BJ (cell line): ENCODE measurements at regions of chr11 and their contacts with region 1.

Region 1: GRCh38 chr11:119474682-119475596 is 52.0 kb upstream of the THY1 start:
- DNase-seq: peak; percentile 56
- H3K4me3 ChIP-seq: no peak overlapping the region
- H3K27me3 ChIP-seq: peaks cover 2% of the 10 kb centered on the region
- CTCF ChIP-seq: peak; percentile 93

Region 2: GRCh38 chr11:118845369-118845768 is 629.6 kb before region 1 on chr11:
- CTCF ChIA-PET with region 1: no interaction called
- POLR2A ChIA-PET with region 1: no interaction called
- DNase-seq: no peak
- H3K4me3 ChIP-seq: no peak overlapping the region
- H3K27me3 ChIP-seq: 0 out of 2 replicates have a peak, but pooled peaks cover 3% of the 10 kb centered on the region
- CTCF ChIP-seq: no peak

Region 3: GRCh38 chr11:119334174-119334930 is 140.6 kb before region 1 on chr11 and contains the start of gene RNF26:
- CTCF ChIA-PET with region 1: interaction called, 43 read pairs
- POLR2A ChIA-PET with region 1: interaction called, 5 read pairs
- DNase-seq: peak; percentile 86
- H3K4me3 ChIP-seq: peak within 1 kb of the TSS; percentile 78
- H3K27me3 ChIP-seq: no peaks in the 10 kb centered on the region
- CTCF ChIP-seq: no peak
- polyA plus RNA-seq, gene RNF26: 38.4 and 65.1 TPM in 2 replicates

Region 4: DNA sequence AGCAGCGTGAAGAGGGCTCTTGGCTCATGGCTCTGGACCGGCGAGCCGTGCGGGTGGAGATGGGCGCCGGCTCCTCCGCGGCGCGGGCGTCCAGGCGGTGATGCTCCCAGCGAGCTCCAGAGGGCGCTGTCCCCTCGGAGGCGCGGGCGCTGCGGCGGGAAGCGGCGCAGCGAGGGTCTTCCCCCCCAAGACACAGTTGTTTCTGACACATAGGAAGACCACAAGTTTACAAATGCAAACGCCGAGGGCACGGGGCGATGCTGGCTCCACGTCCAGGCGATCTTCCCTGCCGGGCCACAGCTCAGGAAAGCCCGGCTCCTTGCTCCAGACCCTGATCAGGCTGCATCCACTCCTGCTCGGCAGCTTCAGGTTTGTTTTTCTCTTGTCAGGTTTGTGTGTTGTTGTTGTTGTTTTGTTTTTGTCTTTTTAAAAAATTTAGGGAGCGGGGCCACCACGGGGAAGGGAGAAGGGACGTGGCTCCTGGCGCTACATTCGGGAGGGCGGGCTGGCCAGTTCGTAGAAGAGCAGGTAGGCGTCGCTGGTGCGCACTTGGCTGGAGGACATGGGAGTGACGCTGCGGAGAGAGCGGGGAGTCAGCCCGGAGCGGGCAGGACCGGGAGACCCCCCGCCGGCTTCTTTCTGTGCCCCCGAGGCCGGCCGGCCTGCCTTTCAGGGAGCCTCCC is 118.4 kb before region 1 on chr11:
- CTCF ChIA-PET with region 1: interaction called, 189 read pairs
- POLR2A ChIA-PET with region 1: no interaction called
- DNase-seq: no peak
- H3K4me3 ChIP-seq: peak overlapping the region; percentile 53
- H3K27me3 ChIP-seq: peaks cover 4% of the 10 kb centered on the region; the same call in 1 of the 2 replicates
- CTCF ChIP-seq: peak; percentile 75

Region 5: DNA sequence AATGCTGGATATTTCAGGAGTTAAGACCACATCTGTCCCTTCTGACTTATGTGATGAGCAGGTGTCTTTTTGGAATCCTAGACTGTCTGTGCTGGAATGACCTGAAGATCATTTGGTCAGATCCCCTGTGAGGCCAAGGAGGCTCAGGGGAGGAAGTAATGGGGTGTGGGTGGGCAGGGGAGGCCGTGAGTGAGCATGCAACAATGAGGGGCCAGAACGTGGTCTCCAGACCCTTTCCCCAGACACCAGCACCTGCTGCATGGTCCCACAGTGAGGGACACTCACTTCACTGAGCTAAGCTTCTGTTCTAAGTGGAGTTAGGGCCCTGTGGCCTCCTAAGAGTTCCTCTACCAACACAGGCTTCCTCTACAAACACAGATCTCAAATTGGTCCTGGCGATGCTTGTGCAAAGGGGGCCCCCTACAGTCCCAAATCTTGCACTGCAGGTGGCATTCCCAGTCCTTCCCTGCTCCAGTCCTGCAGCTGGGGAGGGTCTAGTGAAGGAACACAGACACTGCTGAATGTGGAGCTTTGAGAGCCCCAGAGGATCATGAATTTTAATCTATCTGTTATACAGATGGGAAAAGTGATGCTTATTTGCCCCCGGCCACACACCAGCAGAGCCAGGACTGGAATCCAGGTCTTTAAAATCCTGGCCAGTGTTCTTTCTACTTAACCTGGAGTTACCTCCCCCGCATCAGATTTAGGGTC is 100.9 kb before region 1 on chr11:
- CTCF ChIA-PET with region 1: interaction called, 106 read pairs
- POLR2A ChIA-PET with region 1: no interaction called
- DNase-seq: no peak
- H3K4me3 ChIP-seq: no peak overlapping the region
- H3K27me3 ChIP-seq: no peaks in the 10 kb centered on the region; the same call in 1 of the 2 replicates
- CTCF ChIP-seq: peak; percentile 93

Region 6: GRCh38 chr11:119421941-119422808 is 52.8 kb before region 1 on chr11:
- CTCF ChIA-PET with region 1: interaction called, 25 read pairs
- POLR2A ChIA-PET with region 1: interaction called, 4 read pairs
- DNase-seq: no peak
- H3K4me3 ChIP-seq: peak overlapping the region; percentile 85
- H3K27me3 ChIP-seq: no peaks in the 10 kb centered on the region
- CTCF ChIP-seq: 0 out of 2 replicates have a peak, but pooled peaks have one; percentile 4

Region 7: GRCh38 chr11:119445850-119446249 is 29.1 kb before region 1 on chr11:
- CTCF ChIA-PET with region 1: interaction called, 12 read pairs
- POLR2A ChIA-PET with region 1: interaction called, 3 read pairs
- DNase-seq: peak; percentile 64
- H3K4me3 ChIP-seq: no peak overlapping the region
- H3K27me3 ChIP-seq: no peaks in the 10 kb centered on the region
- CTCF ChIP-seq: no peak

Region 8: DNA sequence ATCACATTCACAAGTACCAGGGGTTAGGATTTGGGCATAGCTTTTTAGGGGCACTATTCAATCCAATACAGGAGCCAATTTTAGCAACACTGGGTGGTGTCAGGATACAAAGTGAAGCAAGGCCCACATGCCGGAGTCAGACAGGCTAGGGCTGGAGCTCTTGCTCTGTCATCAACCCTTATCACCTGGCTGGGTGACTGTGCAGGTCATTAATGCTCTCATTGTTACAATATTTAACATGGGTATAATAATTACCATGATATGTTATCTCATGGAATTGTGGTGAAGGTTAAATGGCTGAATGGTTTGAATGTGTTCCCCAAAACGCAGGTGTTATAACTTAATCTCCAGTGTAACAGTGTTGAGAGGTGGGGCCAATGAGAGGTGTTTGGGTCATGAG is 91.4 kb after region 1 on chr11:
- CTCF ChIA-PET with region 1: no interaction called
- POLR2A ChIA-PET with region 1: no interaction called
- DNase-seq: no peak
- H3K4me3 ChIP-seq: no peak overlapping the region
- H3K27me3 ChIP-seq: peaks cover 1% of the 10 kb centered on the region; the same call in 1 of the 2 replicates
- CTCF ChIP-seq: no peak

Region 9: GRCh38 chr11:119728651-119729580 is 254.0 kb after region 1 on chr11 and contains the start of gene NECTIN1:
- CTCF ChIA-PET with region 1: interaction called, 14 read pairs
- POLR2A ChIA-PET with region 1: no interaction called
- DNase-seq: no peak
- H3K4me3 ChIP-seq: peak within 1 kb of the TSS; percentile 58
- H3K27me3 ChIP-seq: no peaks in the 10 kb centered on the region
- CTCF ChIP-seq: peak; percentile 82
- polyA plus RNA-seq, gene NECTIN1: 1.7 and 3.0 TPM in 2 replicates

Region 10: DNA sequence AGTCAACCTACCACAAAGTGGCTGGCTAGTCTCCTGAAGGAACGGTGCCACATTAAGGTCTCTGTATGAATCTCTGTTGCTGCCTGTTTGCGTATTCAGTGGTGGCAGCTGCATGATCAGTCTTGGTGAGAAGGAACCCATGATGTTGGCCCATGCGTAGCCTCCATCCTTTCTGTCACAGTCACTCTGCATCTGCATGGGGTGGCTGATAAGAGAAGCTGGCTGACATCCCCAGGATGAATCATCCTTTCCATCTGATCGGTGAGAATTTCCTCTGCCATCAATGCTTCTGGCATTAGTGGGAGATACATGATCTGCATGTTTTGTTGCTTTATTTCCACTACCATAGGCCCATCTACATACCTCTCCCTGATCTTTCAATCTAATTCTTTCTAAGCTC is 453.1 kb after region 1 on chr11:
- CTCF ChIA-PET with region 1: no interaction called
- POLR2A ChIA-PET with region 1: no interaction called
- DNase-seq: no peak
- H3K4me3 ChIP-seq: no peak overlapping the region
- H3K27me3 ChIP-seq: no peaks in the 10 kb centered on the region; the same call in 1 of the 2 replicates
- CTCF ChIP-seq: no peak